CD4-positive, alpha-beta T cell (primary cell): ENCODE measurements at regions of chr15 and their contacts with region 1.

Region 1: GRCh38 chr15:45030743-45031142 is 7.7 kb downstream of the SORD start:
- DNase-seq: no peak
- ATAC-seq: no peak
- H3K4me3 ChIP-seq: no peak overlapping the region
- H3K4me3 Mint-ChIP-seq: no peak overlapping the region
- H3K27ac ChIP-seq: no peak overlapping the region
- H3K27ac Mint-ChIP-seq: no peak overlapping the region
- H3K4me1 ChIP-seq: no peaks in the 10 kb centered on the region
- H3K4me1 Mint-ChIP-seq: peaks cover 4% of the 10 kb centered on the region
- H3K27me3 ChIP-seq: no peaks in the 10 kb centered on the region
- H3K27me3 Mint-ChIP-seq: no peaks in the 10 kb centered on the region
- CTCF ChIP-seq: no peak

Region 2: GRCh38 chr15:44719293-44719999 is 311.3 kb before region 1 on chr15:
- CTCF ChIA-PET with region 1: no interaction called
- POLR2A ChIA-PET with region 1: no interaction called
- intact Hi-C with region 1: no loop called
- DNase-seq: peak in 11 of 14 experiments; percentile 31 to 85 (median 50)
- ATAC-seq: peak; percentile 68
- H3K4me3 ChIP-seq: no peak overlapping the region
- H3K4me3 Mint-ChIP-seq: peak overlapping the region; percentile 81
- H3K27ac ChIP-seq: peak overlapping the region; percentile 72 to 74
- H3K27ac Mint-ChIP-seq: peak overlapping the region; percentile 100
- H3K4me1 ChIP-seq: peaks cover 83% of the 10 kb centered on the region
- H3K4me1 Mint-ChIP-seq: peaks cover 88% of the 10 kb centered on the region
- H3K27me3 ChIP-seq: no peaks in the 10 kb centered on the region
- H3K27me3 Mint-ChIP-seq: no peaks in the 10 kb centered on the region
- CTCF ChIP-seq: no peak

Region 3: GRCh38 chr15:44956388-44956787 is 74.4 kb before region 1 on chr15 and contains the start of gene TERB2:
- CTCF ChIA-PET with region 1: no interaction called
- POLR2A ChIA-PET with region 1: no interaction called
- intact Hi-C with region 1: loop called in 1 of 2 experiments (anchors 10 kb)
- DNase-seq: no peak
- ATAC-seq: no peak
- H3K4me3 ChIP-seq: no peak within 1 kb of the TSS
- H3K4me3 Mint-ChIP-seq: no peak within 1 kb of the TSS
- H3K27ac ChIP-seq: no peak within 1 kb of the TSS
- H3K27ac Mint-ChIP-seq: no peak within 1 kb of the TSS
- H3K4me1 ChIP-seq: no peaks in the 10 kb centered on the region
- H3K4me1 Mint-ChIP-seq: no peaks in the 10 kb centered on the region
- H3K27me3 ChIP-seq: no peaks in the 10 kb centered on the region
- H3K27me3 Mint-ChIP-seq: no peaks in the 10 kb centered on the region
- CTCF ChIP-seq: no peak
- total RNA-seq, gene TERB2: not detected